Heart right ventricle (tissue), 16 donors: ENCODE measurements at regions of chr11 and their contacts with region 1.

Region 1: DNA sequence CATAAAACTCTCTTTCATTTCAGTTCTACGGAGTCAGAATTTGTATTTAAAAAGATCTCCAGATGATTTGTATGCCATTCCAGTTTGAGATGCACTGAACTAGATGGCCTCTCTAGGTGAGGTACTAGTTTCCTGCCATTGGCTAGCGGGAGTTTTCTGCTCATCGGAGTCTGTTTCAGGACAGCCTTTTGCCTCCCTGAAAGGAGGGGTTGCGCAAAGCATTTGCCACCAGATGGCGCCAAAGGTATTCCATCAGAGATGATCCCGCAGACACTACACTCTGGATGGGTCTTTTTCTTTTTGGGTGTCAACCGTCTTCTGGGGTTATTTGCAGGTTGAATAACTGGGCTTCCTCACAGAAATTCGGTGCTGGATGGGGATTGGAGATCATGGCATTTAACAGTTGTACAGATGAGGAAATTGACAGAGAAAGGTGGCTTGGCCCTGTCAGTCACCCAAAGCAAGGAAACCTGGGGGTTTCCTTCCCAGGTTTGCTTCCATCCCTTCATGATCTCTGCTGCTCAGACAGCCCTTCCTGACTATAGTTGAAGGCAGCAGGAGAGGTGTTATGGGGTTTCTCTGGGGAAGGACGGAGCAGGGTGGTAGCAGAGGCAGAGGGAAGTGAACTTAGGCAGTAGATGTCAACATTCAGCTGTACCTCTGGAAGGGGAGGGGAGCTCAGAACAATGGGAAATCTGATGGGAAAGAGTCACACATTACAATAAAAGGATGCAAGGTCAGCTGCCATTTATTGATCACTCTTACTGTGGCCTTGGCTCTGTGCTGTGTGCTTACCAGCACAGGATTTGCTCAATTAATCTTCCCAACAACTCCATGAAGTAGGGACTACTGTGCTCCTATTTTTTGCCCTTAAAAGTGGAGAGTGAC is 81.6 kb downstream of the CCDC81 start:
- DNase-seq: peak; percentile 76 to 90
- ATAC-seq: peak; percentile 73 to 89 (median 84)
- H3K4me3 ChIP-seq: no peak overlapping the region
- H3K27ac ChIP-seq: peak overlapping the region in 6 of 10 donors; percentile 1 to 70 (median 28)
- H3K4me1 ChIP-seq: peaks cover 12 to 55% (median 42%) of the 10 kb centered on the region in 9 donors
- H3K27me3 ChIP-seq: no peaks in the 10 kb centered on the region
- CTCF ChIP-seq: peak; percentile 90 to 97 (median 94)

Region 2: DNA sequence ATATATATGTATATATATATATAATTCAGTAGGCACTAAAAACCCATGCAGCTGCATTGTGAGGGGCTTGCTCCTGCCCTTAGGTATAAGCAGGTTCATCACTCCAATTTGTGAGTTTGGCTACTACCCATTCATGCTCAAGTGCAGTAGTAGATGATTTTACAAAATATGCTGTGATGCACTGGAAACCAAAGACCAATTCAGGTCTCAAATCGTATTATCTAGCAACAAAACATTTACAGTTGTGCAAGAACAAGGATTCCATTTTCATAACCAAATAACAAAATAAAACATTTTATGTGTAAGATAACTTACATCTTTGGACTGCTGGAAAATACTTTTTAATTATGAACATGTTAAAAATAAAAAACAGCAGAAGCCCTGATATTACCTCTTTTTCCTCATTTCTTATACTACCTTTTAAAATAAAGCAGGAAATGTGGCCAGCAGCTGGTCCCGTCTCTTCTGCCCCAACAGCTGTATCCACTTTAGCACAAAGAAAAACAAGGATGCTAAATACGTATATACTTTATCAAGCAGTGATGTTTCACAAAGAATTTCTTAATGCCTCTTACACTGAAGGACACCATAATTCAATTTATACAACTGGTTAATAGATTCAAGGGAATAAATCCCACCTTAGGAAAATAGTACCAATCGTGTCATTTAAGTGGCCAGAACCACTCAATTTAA is 794.2 kb before region 1 on chr11:
- intact Hi-C with region 1: no loop called
- DNase-seq: no peak
- ATAC-seq: no peak
- H3K4me3 ChIP-seq: peak overlapping the region in 9 of 10 donors; percentile 64 to 98 (median 91)
- H3K27ac ChIP-seq: peak overlapping the region in 3 of 10 donors; percentile 7 to 99 (median 98)
- H3K4me1 ChIP-seq: peaks cover 4 to 71% (median 59%) of the 10 kb centered on the region in 9 donors
- H3K27me3 ChIP-seq: no peaks in the 10 kb centered on the region
- CTCF ChIP-seq: no peak

Region 3: GRCh38 chr11:86559311-86559945 is 103.1 kb after region 1 on chr11:
- intact Hi-C with region 1: loop called in 1 of 10 experiments (anchors 5 kb)
- DNase-seq: peak; percentile 32 to 68
- ATAC-seq: peak; percentile 72 to 89 (median 84)
- H3K4me3 ChIP-seq: no peak overlapping the region
- H3K27ac ChIP-seq: peak overlapping the region; percentile 69 to 91 (median 84)
- H3K4me1 ChIP-seq: peaks cover 4 to 45% (median 32%) of the 10 kb centered on the region in 9 donors
- H3K27me3 ChIP-seq: no peaks in the 10 kb centered on the region
- CTCF ChIP-seq: no peak

Region 4: GRCh38 chr11:86671682-86672621 is 215.7 kb after region 1 on chr11 and contains the start of gene ME3:
- intact Hi-C with region 1: loop called in 4 of 10 experiments (anchors 5 to 10 kb)
- DNase-seq: peak; percentile 72 to 73
- ATAC-seq: peak; percentile 80 to 89 (median 86)
- H3K4me3 ChIP-seq: peak within 1 kb of the TSS; percentile 48 to 88 (median 82)
- H3K27ac ChIP-seq: peak within 1 kb of the TSS; percentile 74 to 97 (median 94)
- H3K4me1 ChIP-seq: peaks cover 3 to 62% (median 16%) of the 10 kb centered on the region in 9 donors
- H3K27me3 ChIP-seq: peaks cover 0 to 9% (median 0%) of the 10 kb centered on the region in 7 donors
- CTCF ChIP-seq: peak in 1 of 9 donors; percentile 10
- total RNA-seq, gene ME3: 17.4 to 39.8 (median 33.7) TPM

Region 5: GRCh38 chr11:86811637-86812321 is 355.5 kb after region 1 on chr11:
- intact Hi-C with region 1: loop called in 4 of 10 experiments (anchors 2 to 5 kb)
- DNase-seq: no peak
- ATAC-seq: no peak
- H3K4me3 ChIP-seq: no peak overlapping the region
- H3K27ac ChIP-seq: no peak overlapping the region
- H3K4me1 ChIP-seq: peaks cover 0 to 24% (median 2%) of the 10 kb centered on the region in 9 donors
- H3K27me3 ChIP-seq: no peaks in the 10 kb centered on the region
- CTCF ChIP-seq: no peak

Region 6: DNA sequence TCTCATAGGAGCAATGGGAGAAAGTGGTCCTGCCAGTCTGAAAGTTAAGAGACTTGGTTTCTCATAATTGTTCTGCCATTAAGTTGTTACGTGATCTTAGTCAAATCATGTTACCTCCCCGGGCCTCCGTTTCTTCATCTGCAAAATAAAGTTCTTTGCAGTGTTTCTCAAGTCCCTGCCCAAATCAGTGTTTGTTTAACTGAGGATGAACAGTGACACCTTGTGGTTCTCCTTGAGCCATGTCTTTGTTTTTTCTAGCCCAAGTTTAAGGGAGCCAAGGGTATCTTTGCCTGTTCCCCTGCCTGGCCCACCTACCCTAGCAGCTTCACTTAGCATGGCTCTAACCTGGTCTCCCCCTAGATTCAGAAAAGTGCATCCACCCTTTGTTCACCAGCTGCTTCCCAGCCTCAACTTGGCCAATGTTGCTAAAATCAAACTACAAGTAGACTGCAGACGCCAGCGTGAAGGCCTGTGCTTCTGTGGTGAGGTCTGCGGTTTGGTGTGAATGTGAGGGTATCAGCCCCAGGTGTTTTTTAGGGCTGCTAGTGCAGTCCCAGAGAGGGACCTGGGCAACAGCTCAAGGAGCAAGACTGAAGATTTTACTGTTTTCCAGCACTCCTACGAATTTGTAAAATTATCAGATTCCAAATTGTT is 463.4 kb after region 1 on chr11:
- intact Hi-C with region 1: loop called in 2 of 10 experiments (anchors 5 to 10 kb)
- DNase-seq: peak in 1 of 2 donors; percentile 28
- ATAC-seq: peak in 6 of 8 donors; percentile 56 to 78 (median 64)
- H3K4me3 ChIP-seq: no peak overlapping the region
- H3K27ac ChIP-seq: peak overlapping the region; percentile 31 to 92 (median 78)
- H3K4me1 ChIP-seq: peaks cover 8 to 57% (median 40%) of the 10 kb centered on the region in 9 donors
- H3K27me3 ChIP-seq: no peaks in the 10 kb centered on the region
- CTCF ChIP-seq: peak; percentile 48 to 79 (median 67)